Posterior cingulate gyrus (tissue), 11 donors: ENCODE measurements at regions of chr3 and their contacts with region 1.

Region 1: DNA sequence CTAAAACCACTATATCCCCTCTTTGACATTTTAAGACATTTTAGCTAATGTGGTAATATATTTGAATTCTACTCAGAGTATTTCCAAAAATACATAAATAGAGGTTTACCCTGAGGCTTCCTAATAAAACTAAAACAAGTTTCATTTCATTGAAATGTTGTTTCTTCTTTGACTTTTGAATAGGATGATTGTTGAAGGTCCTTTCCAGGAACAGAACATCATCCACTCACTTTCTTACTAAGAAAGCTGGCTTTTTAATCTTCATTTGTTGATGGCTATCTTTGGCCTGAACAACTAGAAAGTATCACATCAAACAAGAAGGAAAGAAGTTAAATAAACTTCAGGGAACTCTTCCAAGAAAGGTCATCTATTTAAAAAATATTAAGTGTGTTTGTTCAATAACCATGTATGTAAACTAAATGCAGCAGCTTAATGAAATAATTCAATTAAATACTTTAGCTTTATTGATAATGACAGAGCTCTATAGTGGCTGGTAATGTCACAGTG is 169.7 kb downstream of the RAP2B start:
- DNase-seq: no peak

Region 2: GRCh38 chr3:153311541-153311940 is 20.2 kb before region 1 on chr3:
- intact Hi-C with region 1: loop called (anchors 2 kb)
- DNase-seq: no peak

Region 3: DNA sequence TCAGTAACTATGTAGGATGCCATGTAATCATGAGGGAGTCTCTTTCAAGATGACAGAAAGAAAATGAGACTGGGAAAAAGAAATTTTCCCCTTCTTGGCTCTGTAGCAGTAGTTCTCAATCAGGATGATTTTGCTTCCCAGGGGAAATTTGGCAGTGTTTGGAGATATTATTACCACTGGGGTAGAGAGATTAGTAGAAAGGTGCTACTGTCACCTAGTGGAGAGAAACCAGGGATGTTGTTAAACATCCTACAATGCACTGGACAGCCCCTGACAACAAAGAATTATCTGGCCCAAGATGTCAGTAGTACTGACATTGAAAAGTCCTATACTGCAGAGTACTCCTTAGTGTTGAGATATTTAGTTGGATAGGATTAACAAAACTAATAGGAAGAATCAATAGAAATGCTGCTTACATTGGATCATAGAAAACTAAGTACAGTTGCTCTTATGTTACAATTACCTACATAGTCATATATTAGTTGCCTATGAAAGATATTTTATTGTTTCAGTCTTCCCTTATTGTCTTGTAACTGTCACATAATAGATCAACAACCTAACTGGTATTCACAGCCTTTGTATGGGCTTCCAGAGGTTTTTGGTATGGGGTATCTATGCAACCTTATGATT is 263.6 kb after region 1 on chr3:
- intact Hi-C with region 1: no loop called
- DNase-seq: no peak